ENCODE measurements at regions of chr1 and their contacts with region 1.

Region 1: GRCh38 chr1:8348777-8349491 is 31.0 kb downstream of the SLC45A1 start:
- DNase-seq: peak; percentile 80 to 89
- ATAC-seq: peak; percentile 79
- H3K4me3 ChIP-seq: no peak overlapping the region
- H3K27ac ChIP-seq: no peak overlapping the region
- H3K4me1 ChIP-seq: no peaks in the 10 kb centered on the region
- H3K27me3 ChIP-seq: no peaks in the 10 kb centered on the region

Region 2: GRCh38 chr1:7760245-7760644 is 588.7 kb before region 1 on chr1:
- intact Hi-C with region 1: no loop called
- DNase-seq: no peak
- ATAC-seq: no peak
- H3K4me3 ChIP-seq: no peak overlapping the region
- H3K27ac ChIP-seq: no peak overlapping the region
- H3K4me1 ChIP-seq: no peaks in the 10 kb centered on the region
- H3K27me3 ChIP-seq: no peaks in the 10 kb centered on the region

Region 3: DNA sequence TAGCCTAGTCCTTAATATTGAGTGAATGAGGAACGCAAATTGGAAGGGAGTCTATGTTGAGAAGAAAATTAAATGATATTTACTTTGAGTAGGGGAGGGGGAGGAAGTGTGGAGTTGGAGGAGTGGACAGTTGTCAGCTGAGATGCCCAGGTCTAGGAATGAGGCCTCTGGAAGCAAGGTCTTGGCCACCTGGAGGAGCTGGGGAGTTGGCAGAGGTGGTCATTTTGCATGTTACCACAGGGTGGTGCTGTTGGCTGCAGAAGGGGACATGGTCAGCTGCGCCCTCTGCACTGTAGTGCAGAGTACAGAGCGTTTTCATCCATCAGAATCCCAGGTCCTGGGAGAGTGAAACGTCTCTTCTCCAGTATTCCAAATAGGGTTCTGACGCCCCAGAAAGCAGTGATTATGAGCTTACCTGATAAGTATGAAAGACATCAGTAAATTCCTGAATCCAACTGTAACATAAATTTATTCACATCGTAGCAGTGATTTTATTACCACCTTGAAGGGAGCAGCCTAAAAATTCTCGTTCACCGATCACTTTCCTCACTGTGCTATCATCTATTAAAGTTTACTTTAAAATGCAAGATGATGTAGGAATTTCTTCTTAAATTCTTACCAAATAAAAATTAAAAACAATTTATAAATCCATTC is 373.6 kb before region 1 on chr1:
- intact Hi-C with region 1: loop called in 1 of 2 experiments (anchors 2 kb)
- DNase-seq: peak; percentile 66 to 85
- ATAC-seq: peak; percentile 91
- H3K4me3 ChIP-seq: no peak overlapping the region
- H3K27ac ChIP-seq: no peak overlapping the region
- H3K4me1 ChIP-seq: no peaks in the 10 kb centered on the region
- H3K27me3 ChIP-seq: no peaks in the 10 kb centered on the region

Region 4: GRCh38 chr1:7983086-7983778 is 365.7 kb before region 1 on chr1:
- intact Hi-C with region 1: loop called (anchors 1 to 2 kb)
- DNase-seq: peak in 1 of 2 donors; percentile 59
- ATAC-seq: no peak
- H3K4me3 ChIP-seq: no peak overlapping the region
- H3K27ac ChIP-seq: no peak overlapping the region
- H3K4me1 ChIP-seq: no peaks in the 10 kb centered on the region
- H3K27me3 ChIP-seq: no peaks in the 10 kb centered on the region